K562 (cell line): ENCODE measurements at regions of chr7 and their contacts with region 1.

Region 1: GRCh38 chr7:30510124-30511075 is 5.8 kb upstream of the GGCT start:
- DNase-seq: peak; percentile 20 to 65 (median 42)
- ATAC-seq: peak; percentile 80
- H3K4me3 ChIP-seq: no peak overlapping the region
- H3K27ac ChIP-seq: no peak overlapping the region
- H3K4me1 ChIP-seq: no peaks in the 10 kb centered on the region; a peak in 2 of 5 replicates
- H3K27me3 ChIP-seq: no peaks in the 10 kb centered on the region
- CTCF ChIP-seq: peak; percentile 66 to 81 (median 78); a peak in 5 of 6 replicates
- EP300 ChIP-seq: no peak
- POLR2A ChIP-seq: no peak
- RAD21 ChIP-seq: peak; percentile 40 to 77

Region 2: DNA sequence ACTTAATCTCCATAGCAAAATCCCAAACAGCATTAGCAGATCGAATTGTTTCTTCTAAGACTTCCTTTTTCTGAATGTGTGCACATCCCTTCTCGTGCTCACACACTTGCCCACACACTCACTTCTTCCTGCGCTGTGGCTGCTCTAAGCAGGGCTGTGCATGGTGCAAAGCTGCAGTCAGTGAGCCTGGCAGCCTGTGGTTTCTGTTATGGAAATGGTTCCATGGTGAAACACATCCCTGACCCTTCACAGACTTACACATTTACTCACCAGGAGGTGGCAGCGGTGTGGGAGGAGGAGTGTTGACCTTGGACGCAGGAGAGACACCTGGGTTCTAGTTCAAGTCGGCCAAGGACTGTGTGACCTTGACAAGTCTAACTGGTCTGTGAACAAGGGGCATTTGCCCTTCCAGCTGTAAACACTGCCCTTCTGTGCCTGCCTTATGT is 350.7 kb before region 1 on chr7:
- CTCF ChIA-PET with region 1: no interaction called
- POLR2A ChIA-PET with region 1: no interaction called
- in situ Hi-C with region 1: no loop called
- intact Hi-C with region 1: no loop called
- DNase-seq: peak in 3 of 4 experiments; percentile 35 to 55 (median 42)
- ATAC-seq: peak; percentile 59
- H3K4me3 ChIP-seq: no peak overlapping the region
- H3K27ac ChIP-seq: peak overlapping the region; percentile 13; the same call in 2 of the 3 replicates
- H3K4me1 ChIP-seq: peaks cover 12 to 42% of the 10 kb centered on the region in 2 experiments
- H3K27me3 ChIP-seq: no peaks in the 10 kb centered on the region
- CTCF ChIP-seq: peak; percentile 27 to 42 (median 29); a peak in 4 of 6 replicates
- EP300 ChIP-seq: no peak
- POLR2A ChIP-seq: no peak
- RAD21 ChIP-seq: peak in 1 of 2 experiments; percentile 7; a peak in 1 of 4 replicates

Region 3: DNA sequence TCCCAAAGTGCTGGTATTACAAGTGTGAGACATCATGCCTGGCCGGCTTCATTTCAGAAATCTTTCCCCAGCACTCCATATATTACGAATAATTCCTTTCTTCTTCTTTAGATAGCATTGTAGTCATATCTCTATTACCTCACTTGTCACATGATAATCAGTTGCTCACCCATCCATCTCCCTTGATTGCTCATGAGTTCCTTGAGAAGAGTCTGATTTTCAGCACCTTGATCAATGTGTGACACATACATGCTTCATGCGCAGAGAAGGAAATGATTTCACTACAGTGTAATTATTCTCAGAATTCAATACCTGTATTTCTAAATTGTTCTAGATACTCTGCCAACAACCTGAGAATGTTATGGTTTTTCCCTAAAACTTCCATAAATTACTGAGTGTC is 20.9 kb after region 1 on chr7:
- CTCF ChIA-PET with region 1: interaction called, 4 read pairs
- POLR2A ChIA-PET with region 1: interaction called, 3 read pairs
- in situ Hi-C with region 1: no loop called
- intact Hi-C with region 1: loop called (anchors 1 kb)
- DNase-seq: no peak
- ATAC-seq: no peak
- H3K4me3 ChIP-seq: no peak overlapping the region
- H3K27ac ChIP-seq: no peak overlapping the region
- H3K4me1 ChIP-seq: no peaks in the 10 kb centered on the region
- H3K27me3 ChIP-seq: no peaks in the 10 kb centered on the region
- CTCF ChIP-seq: no peak
- EP300 ChIP-seq: no peak
- POLR2A ChIP-seq: no peak
- RAD21 ChIP-seq: no peak

Region 4: DNA sequence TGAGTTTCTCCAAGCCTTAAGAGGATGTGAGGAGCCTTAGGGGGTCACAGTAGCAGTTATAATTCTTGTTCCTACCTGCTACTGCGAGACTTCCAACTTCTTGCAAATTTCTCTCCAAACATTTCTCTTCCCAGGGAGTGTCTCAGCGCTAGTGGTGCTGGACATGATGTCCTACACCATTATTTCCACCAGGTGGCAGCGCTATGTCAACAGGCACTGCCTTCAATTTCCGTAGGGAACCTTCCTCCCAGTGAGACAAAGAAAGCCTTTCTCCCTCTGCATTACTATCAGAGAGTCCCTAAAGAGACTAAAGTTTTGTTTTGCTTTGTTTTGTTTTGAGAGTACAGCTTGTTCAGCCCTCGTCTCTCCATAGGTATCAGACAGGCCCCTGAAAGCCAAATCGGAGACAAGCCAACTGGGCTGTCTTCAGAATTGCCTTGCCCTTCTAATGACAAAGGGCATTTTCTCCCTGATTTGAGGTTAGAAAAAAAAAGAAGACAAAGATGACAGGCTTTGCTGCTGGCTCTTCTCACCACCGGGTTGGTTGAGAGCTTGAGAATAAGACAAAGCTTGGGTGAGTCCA is 38.5 kb after region 1 on chr7:
- CTCF ChIA-PET with region 1: interaction called, 3 read pairs
- POLR2A ChIA-PET with region 1: interaction called, 3 read pairs
- in situ Hi-C with region 1: no loop called
- intact Hi-C with region 1: loop called (anchors 5 kb)
- DNase-seq: peak; percentile 69 to 75 (median 72)
- ATAC-seq: peak; percentile 97
- H3K4me3 ChIP-seq: no peak overlapping the region
- H3K27ac ChIP-seq: no peak overlapping the region
- H3K4me1 ChIP-seq: peaks cover 0 to 10% of the 10 kb centered on the region in 2 experiments; a peak in 3 of 5 replicates
- H3K27me3 ChIP-seq: no peaks in the 10 kb centered on the region
- CTCF ChIP-seq: peak; percentile 72 to 79 (median 77)
- EP300 ChIP-seq: no peak
- POLR2A ChIP-seq: no peak
- RAD21 ChIP-seq: peak; percentile 57 to 80